Activated CD4-positive, alpha-beta memory T cell treated with anti-CD3 and anti-CD28 coated beads for 36 hours (primary cell): ENCODE measurements at regions of chr13 and their contacts with region 1.

Region 1: GRCh38 chr13:33542283-33543088 is 256.9 kb upstream of the STARD13 start:
- DNase-seq: peak; percentile 99
- H3K4me3 Mint-ChIP-seq: peak overlapping the region; percentile 83
- H3K27ac Mint-ChIP-seq: peak overlapping the region; percentile 100
- H3K4me1 Mint-ChIP-seq: peaks cover 51% of the 10 kb centered on the region
- H3K27me3 Mint-ChIP-seq: no peaks in the 10 kb centered on the region

Region 2: DNA sequence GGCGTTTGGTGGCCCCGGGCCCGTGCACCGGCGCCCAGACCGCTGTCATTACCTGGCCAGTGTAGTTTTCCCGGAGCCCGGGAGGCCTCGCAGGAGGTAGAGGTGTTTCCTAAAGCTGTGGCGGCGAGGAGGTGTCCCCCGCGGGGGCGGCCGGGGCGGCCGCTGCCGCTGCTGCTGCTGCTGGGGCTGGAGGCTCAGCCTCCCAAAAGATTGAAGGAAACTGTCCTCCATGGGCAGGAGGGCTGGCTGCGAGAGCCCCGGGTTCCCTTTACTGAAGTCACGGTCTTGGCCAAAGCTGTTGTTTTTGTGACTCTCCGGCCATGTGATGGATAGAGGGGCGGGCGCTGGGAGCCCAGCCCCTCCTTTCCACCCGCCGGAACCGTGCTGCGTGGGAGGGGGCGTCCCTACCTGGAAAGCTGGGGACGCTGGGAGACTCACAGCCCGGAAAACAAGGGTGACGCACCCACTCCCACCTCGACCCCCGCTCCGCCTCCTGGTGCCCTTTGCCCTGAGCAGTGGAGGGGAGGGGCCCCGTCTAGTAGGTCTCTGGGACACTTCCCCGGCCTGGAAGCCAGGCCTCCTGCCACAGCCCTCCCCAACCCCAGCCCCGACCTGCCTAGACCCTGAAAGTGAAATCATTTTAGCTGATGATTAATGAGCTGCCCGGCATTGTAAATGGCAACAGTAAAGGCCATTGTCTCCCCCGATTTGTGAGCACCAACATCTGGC is 1114.5 kb before region 1 on chr13 and contains the start of gene N4BP2L1:
- CTCF ChIA-PET with region 1: no interaction called
- POLR2A ChIA-PET with region 1: no interaction called
- intact Hi-C with region 1: loop called (anchors 1 kb)
- DNase-seq: peak; percentile 94
- H3K4me3 Mint-ChIP-seq: peak within 1 kb of the TSS; percentile 88
- H3K27ac Mint-ChIP-seq: peak within 1 kb of the TSS; percentile 96
- H3K4me1 Mint-ChIP-seq: peaks cover 38% of the 10 kb centered on the region
- H3K27me3 Mint-ChIP-seq: no peaks in the 10 kb centered on the region
- total RNA-seq, gene N4BP2L1: 22.1 to 24.0 TPM

Region 3: GRCh38 chr13:32586080-32586900 is 956.2 kb before region 1 on chr13 and contains the start of gene PDS5B:
- CTCF ChIA-PET with region 1: interaction called, 10 read pairs
- POLR2A ChIA-PET with region 1: no interaction called
- intact Hi-C with region 1: loop called (anchors 1 kb)
- DNase-seq: peak; percentile 95
- H3K4me3 Mint-ChIP-seq: peak within 1 kb of the TSS; percentile 94
- H3K27ac Mint-ChIP-seq: peak within 1 kb of the TSS; percentile 95
- H3K4me1 Mint-ChIP-seq: peaks cover 36% of the 10 kb centered on the region
- H3K27me3 Mint-ChIP-seq: no peaks in the 10 kb centered on the region
- total RNA-seq, gene PDS5B: 59.4 to 61.7 TPM

Region 4: DNA sequence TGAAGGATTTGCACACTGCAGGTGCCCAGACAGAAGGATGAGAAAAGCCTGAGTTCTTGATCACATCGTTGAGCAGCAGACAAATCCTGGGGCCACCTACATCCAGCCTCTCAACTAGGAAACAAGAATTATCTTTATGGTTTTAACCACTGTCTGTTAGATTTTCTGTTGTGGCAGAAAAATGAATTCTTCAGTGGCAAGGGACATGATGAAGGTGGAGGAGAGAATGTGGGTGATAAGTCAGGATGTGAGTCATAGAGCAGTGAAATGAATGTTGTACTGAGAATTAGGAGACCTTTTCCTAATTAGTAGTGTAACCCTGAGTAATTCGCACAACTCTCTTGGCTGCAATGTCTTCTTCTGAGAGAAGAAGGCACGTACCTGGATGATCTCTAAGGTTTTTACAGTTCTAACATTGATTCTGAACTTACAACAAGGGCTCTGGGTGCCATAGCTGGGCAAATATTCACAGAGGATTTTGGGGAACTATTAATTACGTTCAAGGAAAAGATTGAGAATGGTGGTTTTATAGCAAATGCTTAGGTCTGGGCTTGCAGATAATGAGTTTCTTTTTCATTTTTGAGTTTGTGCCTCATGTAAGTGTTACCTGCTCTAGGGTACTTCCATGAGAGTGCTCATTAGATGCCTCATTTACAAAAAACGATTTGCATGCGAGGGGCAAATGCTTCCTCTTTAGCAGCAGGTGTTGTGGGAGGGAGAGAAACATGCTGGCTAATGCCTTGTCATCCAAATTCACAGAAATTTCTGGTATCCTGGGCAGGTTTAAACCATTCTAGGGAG is 637.2 kb before region 1 on chr13:
- CTCF ChIA-PET with region 1: no interaction called
- POLR2A ChIA-PET with region 1: no interaction called
- intact Hi-C with region 1: loop called (anchors 1 kb)
- DNase-seq: peak; percentile 40
- H3K4me3 Mint-ChIP-seq: peak overlapping the region; percentile 44
- H3K27ac Mint-ChIP-seq: peak overlapping the region; percentile 87
- H3K4me1 Mint-ChIP-seq: peaks cover 19% of the 10 kb centered on the region
- H3K27me3 Mint-ChIP-seq: peaks cover 33% of the 10 kb centered on the region

Region 5: DNA sequence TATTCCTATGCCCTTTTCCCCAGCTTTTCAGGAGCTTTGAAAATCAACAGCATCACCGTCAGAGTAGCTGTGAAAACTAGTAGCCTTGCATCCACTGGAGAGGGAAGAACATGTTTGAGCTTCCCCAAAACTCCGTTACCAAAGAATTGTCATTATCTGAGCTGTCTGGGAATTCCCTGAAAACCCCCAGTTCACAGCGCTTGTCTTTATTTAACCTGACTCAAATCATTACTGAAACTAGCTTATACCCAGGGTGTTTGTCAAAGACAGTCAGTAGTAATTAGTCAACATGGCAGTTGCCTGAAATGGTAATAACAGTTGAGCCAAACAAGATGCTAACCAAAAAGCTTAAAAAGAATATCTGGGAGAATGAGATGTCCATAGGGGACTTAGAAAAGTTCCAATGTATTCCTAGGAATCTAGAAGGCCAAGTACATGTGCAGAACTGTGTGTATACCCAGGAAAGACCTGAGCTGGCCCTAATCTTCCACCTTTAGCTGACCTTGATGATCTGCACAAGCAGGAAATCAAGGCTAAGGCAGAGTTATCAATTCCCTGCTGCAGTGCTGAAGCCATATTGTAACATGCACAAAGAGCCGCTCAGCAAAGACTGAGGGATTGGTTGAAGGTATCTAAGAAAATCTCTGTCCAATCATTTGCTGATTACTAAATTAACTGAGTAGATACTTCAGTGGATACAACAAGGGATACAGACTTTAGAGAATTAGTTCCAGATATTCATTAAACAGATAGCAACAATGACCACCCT is 395.5 kb before region 1 on chr13:
- CTCF ChIA-PET with region 1: interaction called, 4 read pairs
- POLR2A ChIA-PET with region 1: no interaction called
- intact Hi-C with region 1: loop called (anchors 5 kb)
- DNase-seq: peak; percentile 31
- H3K4me3 Mint-ChIP-seq: no peak overlapping the region
- H3K27ac Mint-ChIP-seq: peak overlapping the region; percentile 30
- H3K4me1 Mint-ChIP-seq: peaks cover 16% of the 10 kb centered on the region
- H3K27me3 Mint-ChIP-seq: peaks cover 11% of the 10 kb centered on the region

Region 6: GRCh38 chr13:33639626-33640080 is 97.2 kb after region 1 on chr13:
- CTCF ChIA-PET with region 1: interaction called, 5 read pairs
- POLR2A ChIA-PET with region 1: no interaction called
- intact Hi-C with region 1: loop called (anchors 1 kb)
- DNase-seq: peak; percentile 82
- H3K4me3 Mint-ChIP-seq: no peak overlapping the region
- H3K27ac Mint-ChIP-seq: peak overlapping the region; percentile 92
- H3K4me1 Mint-ChIP-seq: peaks cover 57% of the 10 kb centered on the region
- H3K27me3 Mint-ChIP-seq: no peaks in the 10 kb centered on the region

Region 7: DNA sequence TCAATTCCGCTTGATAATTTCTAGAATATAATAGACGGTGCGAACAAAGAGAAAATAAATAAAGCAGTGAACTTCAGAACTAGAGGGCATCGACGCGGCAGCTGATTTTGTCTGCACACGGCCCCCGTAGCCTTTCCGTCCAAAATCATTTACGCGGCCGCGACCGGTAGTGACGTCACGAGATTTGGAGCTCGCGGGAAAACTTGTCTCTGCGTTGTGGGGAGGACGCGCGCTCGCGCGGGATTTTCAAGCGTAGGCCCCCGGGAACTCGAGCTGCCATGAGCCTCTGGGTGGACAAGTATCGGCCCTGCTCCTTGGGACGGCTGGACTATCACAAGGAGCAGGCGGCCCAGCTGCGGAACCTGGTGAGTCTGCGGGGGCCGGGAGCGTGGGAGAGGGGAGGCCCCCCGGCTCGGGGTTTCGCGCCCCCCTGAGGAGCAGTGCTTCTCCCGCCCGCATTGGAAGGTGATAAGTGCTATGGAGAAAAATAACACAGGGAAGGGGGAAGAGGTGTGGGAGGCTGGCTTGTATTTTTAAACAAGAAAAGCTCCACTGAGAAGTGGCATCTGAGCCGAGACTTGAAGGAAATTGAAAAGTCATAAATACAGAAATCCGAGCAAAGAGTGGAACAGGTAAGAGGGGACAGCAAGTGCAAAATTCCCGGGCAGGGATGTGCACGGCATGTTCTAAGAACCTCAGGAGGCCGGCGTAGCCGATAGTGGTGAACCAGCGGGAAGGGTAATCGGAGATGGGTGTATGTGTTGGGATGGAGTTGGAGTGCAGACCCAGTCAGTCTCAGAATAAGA is 275.6 kb after region 1 on chr13 and contains the start of gene RFC3:
- CTCF ChIA-PET with region 1: interaction called, 6 read pairs
- POLR2A ChIA-PET with region 1: no interaction called
- intact Hi-C with region 1: loop called (anchors 1 kb)
- DNase-seq: peak; percentile 96
- H3K4me3 Mint-ChIP-seq: peak within 1 kb of the TSS; percentile 99
- H3K27ac Mint-ChIP-seq: peak within 1 kb of the TSS; percentile 62
- H3K4me1 Mint-ChIP-seq: peaks cover 34% of the 10 kb centered on the region
- H3K27me3 Mint-ChIP-seq: peaks cover 4% of the 10 kb centered on the region
- total RNA-seq, gene RFC3: 52.4 to 53.9 TPM